Head of caudate nucleus (tissue), 42 donors: ENCODE measurements at regions of chr11 and their contacts with region 1.

Region 1: GRCh38 chr11:67401495-67402191 is at the start of gene PPP1CA:
- DNase-seq: peak; percentile 80 to 97 (median 94)

Region 2: GRCh38 chr11:66842896-66843775 is 558.5 kb before region 1 on chr11 and contains the start of gene RCE1:
- intact Hi-C with region 1: no loop called
- DNase-seq: peak; percentile 69 to 96 (median 92)

Region 3: GRCh38 chr11:67468835-67469811 is 67.5 kb after region 1 on chr11 and contains the start of gene TMEM134:
- intact Hi-C with region 1: loop called (anchors 5 kb)
- DNase-seq: peak; percentile 85 to 99 (median 96)